IMR-90 (cell line): ENCODE measurements at regions of chr17 and their contacts with region 1.

Region 1: DNA sequence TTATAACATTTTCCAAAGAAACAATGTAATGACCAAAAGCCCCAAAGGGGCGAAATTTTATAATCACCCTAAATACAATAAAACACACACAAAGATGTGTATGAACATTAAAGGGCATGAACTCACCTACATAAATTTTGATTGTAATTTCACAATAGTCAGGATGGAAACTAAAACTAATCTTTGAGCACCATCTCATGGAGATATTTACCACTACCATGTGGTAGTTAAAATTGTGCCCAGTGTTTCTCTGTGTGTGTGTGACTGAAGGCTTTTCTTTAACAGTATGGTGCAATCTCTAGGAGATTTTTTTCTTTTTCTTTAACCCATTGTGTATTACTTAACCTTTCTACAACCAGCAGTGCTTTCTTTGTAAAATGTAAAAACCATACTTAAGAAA is 19.7 kb upstream of the MEIOC start:
- DNase-seq: peak; percentile 72
- ATAC-seq: peak; percentile 82
- H3K4me3 ChIP-seq: no peak overlapping the region
- H3K27ac ChIP-seq: no peak overlapping the region
- H3K4me1 ChIP-seq: no peaks in the 10 kb centered on the region
- H3K27me3 ChIP-seq: peaks cover 4% of the 10 kb centered on the region; the same call in 1 of the 2 replicates
- CTCF ChIP-seq: peak; percentile 80
- POLR2A ChIP-seq: 0 out of 2 replicates have a peak, but pooled peaks have one; percentile 21
- RAD21 ChIP-seq: peak; percentile 87

Region 2: DNA sequence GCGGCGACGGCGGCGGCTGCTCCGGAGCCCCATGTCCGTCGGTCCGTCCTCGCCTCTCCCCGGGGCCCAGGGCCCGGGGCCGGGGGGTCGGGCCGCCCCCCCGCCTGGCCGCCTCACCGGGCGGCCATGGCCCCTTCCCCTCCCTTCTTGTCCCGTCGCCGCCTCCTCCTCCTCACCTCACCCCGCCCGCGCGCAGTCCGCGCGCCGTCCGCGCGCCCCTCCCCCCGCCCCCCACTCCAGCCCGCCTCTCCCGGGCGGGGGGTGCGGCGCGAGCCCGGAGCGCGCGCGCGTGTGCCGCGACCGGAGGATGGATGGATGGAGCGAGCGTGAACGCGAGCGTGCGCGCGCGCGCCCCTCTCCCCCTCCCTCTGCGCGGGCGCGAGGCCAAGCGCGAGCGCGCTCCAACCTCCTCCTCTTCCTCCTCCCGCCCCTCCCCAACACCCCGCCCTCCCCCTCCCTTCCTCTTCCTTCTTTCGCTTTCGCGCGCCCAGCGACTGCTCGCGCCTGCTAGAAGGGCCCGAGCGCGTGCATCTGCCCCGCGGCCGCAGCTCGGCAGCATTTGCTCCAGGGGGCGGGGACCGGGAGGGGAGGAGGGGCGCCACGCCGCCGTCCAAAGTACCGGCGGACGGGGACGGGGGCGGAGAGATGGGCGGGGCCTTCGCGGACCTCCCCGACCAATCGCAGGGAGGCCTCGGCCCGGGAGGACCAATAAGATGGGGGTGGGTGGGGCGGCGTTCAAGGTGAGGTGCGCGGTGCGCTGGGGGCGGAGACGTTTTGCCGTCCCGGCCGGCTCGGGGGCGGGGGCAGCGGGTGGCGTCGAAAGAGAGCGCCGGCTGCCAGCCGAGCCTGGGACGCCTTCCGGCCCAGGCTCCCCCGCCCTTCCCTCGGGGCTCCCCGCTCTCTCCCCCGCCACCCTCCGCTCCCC is 436.7 kb before region 1 on chr17 and contains the start of gene ATXN7L3:
- CTCF ChIA-PET with region 1: interaction called, 5 read pairs
- POLR2A ChIA-PET with region 1: no interaction called
- dilution Hi-C with region 1: no loop called
- in situ Hi-C with region 1: loop called (anchors 25 kb)
- intact Hi-C with region 1: no loop called
- DNase-seq: peak; percentile 97
- ATAC-seq: peak; percentile 84
- H3K4me3 ChIP-seq: peak within 1 kb of the TSS; percentile 85
- H3K27ac ChIP-seq: peak within 1 kb of the TSS; percentile 98
- H3K4me1 ChIP-seq: peaks cover 22% of the 10 kb centered on the region
- H3K27me3 ChIP-seq: no peaks in the 10 kb centered on the region
- CTCF ChIP-seq: no peak
- POLR2A ChIP-seq: peak; percentile 79
- RAD21 ChIP-seq: no peak
- total RNA-seq, gene ATXN7L3: 17.2 and 17.5 TPM in 2 replicates

Region 3: DNA sequence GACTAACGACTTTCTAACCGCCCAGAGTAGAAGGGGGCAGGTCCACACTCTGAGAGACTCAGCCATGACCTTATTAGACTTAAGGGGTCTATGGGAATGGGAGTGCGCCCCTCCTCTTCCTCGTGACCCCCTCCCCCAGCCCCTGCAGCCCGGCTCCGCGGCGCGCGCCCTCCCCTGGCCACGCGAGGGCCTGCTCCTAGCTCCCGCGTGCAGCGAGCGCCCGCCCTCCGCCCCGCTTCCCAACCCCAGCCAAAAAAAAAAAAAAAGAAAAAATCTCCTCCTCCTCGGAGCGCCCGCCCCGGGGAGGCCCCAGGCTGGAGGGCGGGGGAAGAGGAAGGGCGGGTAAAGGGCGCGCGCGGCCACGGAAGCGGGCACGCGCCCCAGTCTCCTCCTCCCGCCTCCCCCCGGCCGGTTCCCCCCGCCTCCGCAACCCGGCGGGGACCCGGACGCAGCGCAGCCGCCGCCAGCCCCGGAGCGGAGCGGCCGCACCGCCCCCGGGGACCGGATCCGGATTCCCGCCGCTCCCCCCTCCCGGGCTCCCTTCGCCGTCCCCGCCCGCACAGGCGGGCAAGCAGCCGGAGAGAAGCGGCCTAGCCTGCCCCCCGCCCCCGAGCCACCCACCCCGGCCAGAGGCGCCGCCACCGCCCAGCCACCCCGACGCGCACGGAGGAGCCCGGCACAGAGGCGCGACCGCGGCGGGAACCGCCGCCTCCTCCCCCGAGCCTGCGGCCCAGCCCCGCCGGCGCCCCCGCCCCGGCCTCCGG is 418.0 kb before region 1 on chr17:
- CTCF ChIA-PET with region 1: no interaction called
- POLR2A ChIA-PET with region 1: no interaction called
- dilution Hi-C with region 1: no loop called
- in situ Hi-C with region 1: loop called (anchors 25 kb)
- intact Hi-C with region 1: loop called (anchors 5 kb)
- DNase-seq: peak; percentile 83
- ATAC-seq: peak; percentile 66
- H3K4me3 ChIP-seq: peak overlapping the region; percentile 61
- H3K27ac ChIP-seq: peak overlapping the region; percentile 92
- H3K4me1 ChIP-seq: peaks cover 12% of the 10 kb centered on the region
- H3K27me3 ChIP-seq: no peaks in the 10 kb centered on the region
- CTCF ChIP-seq: peak; percentile 66
- POLR2A ChIP-seq: peak; percentile 42; the same call in 1 of the 2 replicates
- RAD21 ChIP-seq: peak; percentile 31

Region 4: GRCh38 chr17:44400226-44400847 is 236.2 kb before region 1 on chr17:
- CTCF ChIA-PET with region 1: no interaction called
- POLR2A ChIA-PET with region 1: no interaction called
- dilution Hi-C with region 1: no loop called
- in situ Hi-C with region 1: loop called (anchors 10 kb)
- intact Hi-C with region 1: loop called (anchors 2 kb)
- DNase-seq: peak; percentile 41
- ATAC-seq: peak; percentile 89
- H3K4me3 ChIP-seq: no peak overlapping the region
- H3K27ac ChIP-seq: no peak overlapping the region
- H3K4me1 ChIP-seq: no peaks in the 10 kb centered on the region
- H3K27me3 ChIP-seq: no peaks in the 10 kb centered on the region
- CTCF ChIP-seq: peak; percentile 66
- POLR2A ChIP-seq: no peak
- RAD21 ChIP-seq: peak; percentile 65

Region 5: GRCh38 chr17:44533533-44534246 is 102.9 kb before region 1 on chr17:
- CTCF ChIA-PET with region 1: interaction called, 14 read pairs
- POLR2A ChIA-PET with region 1: no interaction called
- dilution Hi-C with region 1: no loop called
- in situ Hi-C with region 1: loop called (anchors 5 kb)
- intact Hi-C with region 1: loop called (anchors 1 kb)
- DNase-seq: peak; percentile 90
- ATAC-seq: peak; percentile 83
- H3K4me3 ChIP-seq: peak overlapping the region; percentile 2; the same call in 1 of the 2 replicates
- H3K27ac ChIP-seq: peak overlapping the region; percentile 61
- H3K4me1 ChIP-seq: peaks cover 12% of the 10 kb centered on the region
- H3K27me3 ChIP-seq: no peaks in the 10 kb centered on the region
- CTCF ChIP-seq: peak; percentile 98
- POLR2A ChIP-seq: peak; percentile 60; the same call in 1 of the 2 replicates
- RAD21 ChIP-seq: peak; percentile 99

Region 6: DNA sequence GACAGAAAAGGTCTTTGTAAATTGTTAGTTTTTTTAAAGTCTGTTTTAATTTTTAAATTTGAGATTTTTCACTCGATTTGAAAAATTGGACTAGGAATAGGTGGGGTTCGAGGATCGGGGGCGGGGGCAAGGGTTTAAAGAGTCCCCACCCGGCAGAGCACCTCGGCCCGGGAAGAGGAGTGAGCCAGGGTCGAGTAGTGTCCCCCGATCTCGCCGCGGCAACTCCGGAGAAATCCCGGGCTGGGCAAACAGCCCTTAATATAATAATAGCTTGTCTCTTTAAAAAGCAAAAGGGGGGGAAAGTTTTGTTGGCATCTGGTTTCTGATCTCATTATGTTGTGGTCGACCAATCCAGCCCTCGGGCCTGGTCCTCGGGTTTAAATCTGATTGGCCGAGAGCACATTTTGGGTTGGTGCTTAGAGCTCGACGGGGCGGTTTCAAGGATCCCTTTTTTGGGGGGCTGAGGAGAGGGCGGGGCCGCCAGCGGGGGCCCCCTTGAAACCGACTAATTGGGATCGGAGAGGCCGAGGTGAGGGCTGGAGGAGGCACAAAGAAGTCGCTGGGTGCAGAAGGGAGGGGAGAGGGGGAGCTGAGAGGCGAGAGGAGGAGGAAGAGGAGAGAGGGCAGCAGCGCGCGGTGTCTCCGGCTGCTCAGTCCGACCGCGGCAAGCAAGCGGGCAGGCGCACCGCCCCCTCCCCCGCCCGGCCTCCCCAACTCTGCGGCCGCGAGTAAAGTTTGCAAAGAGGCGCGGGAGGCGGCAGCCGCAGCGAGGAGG is 79.5 kb before region 1 on chr17 and contains the start of gene FZD2:
- CTCF ChIA-PET with region 1: no interaction called
- POLR2A ChIA-PET with region 1: interaction called, 5 read pairs
- dilution Hi-C with region 1: no loop called
- in situ Hi-C with region 1: no loop called
- intact Hi-C with region 1: loop called (anchors 1 kb)
- DNase-seq: peak; percentile 99
- ATAC-seq: peak; percentile 80
- H3K4me3 ChIP-seq: peak within 1 kb of the TSS; percentile 87
- H3K27ac ChIP-seq: peak within 1 kb of the TSS; percentile 91
- H3K4me1 ChIP-seq: peaks cover 14% of the 10 kb centered on the region
- H3K27me3 ChIP-seq: no peaks in the 10 kb centered on the region
- CTCF ChIP-seq: no peak
- POLR2A ChIP-seq: peak; percentile 58
- RAD21 ChIP-seq: no peak
- total RNA-seq, gene FZD2: 21.3 and 22.8 TPM in 2 replicates

Region 7: GRCh38 chr17:44565866-44566443 is 70.6 kb before region 1 on chr17:
- CTCF ChIA-PET with region 1: no interaction called
- POLR2A ChIA-PET with region 1: interaction called, 5 read pairs
- dilution Hi-C with region 1: no loop called
- in situ Hi-C with region 1: no loop called
- intact Hi-C with region 1: loop called (anchors 2 kb)
- DNase-seq: no peak
- ATAC-seq: peak; percentile 55; the same call in 1 of the 2 replicates
- H3K4me3 ChIP-seq: no peak overlapping the region
- H3K27ac ChIP-seq: no peak overlapping the region
- H3K4me1 ChIP-seq: peaks cover 3% of the 10 kb centered on the region
- H3K27me3 ChIP-seq: no peaks in the 10 kb centered on the region
- CTCF ChIP-seq: peak; percentile 64
- POLR2A ChIP-seq: no peak
- RAD21 ChIP-seq: peak; percentile 70

Region 8: DNA sequence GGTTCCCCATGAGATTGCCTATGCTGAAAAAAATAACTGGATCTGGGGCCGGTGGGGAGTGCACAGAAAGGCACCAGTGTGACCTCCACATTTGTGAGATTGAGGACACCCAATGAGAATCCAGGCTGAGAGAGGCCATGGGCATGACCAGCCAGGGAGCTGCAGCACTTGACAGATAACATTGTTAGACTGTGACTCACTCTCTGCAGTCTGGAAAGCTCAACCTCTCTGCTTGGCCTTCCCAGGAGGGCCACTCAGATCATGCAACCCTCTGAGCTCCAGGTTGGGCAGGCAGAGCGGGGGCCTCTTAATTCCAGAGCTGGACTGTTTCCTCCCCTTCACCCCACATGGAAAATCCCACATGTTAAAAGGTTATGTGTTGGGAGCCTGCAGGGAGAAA is 49.2 kb before region 1 on chr17:
- CTCF ChIA-PET with region 1: no interaction called
- POLR2A ChIA-PET with region 1: no interaction called
- dilution Hi-C with region 1: no loop called
- in situ Hi-C with region 1: no loop called
- intact Hi-C with region 1: no loop called
- DNase-seq: peak; percentile 91
- ATAC-seq: peak; percentile 100
- H3K4me3 ChIP-seq: no peak overlapping the region
- H3K27ac ChIP-seq: peak overlapping the region; percentile 38
- H3K4me1 ChIP-seq: peaks cover 9% of the 10 kb centered on the region
- H3K27me3 ChIP-seq: no peaks in the 10 kb centered on the region
- CTCF ChIP-seq: no peak
- POLR2A ChIP-seq: no peak
- RAD21 ChIP-seq: peak; percentile 8; the same call in 1 of the 2 replicates

Region 9: GRCh38 chr17:44623070-44623725 is 13.4 kb before region 1 on chr17:
- CTCF ChIA-PET with region 1: no interaction called
- POLR2A ChIA-PET with region 1: no interaction called
- dilution Hi-C with region 1: no loop called
- in situ Hi-C with region 1: no loop called
- intact Hi-C with region 1: no loop called
- DNase-seq: no peak
- ATAC-seq: no peak
- H3K4me3 ChIP-seq: no peak overlapping the region
- H3K27ac ChIP-seq: no peak overlapping the region
- H3K4me1 ChIP-seq: peaks cover 3% of the 10 kb centered on the region; the same call in 1 of the 2 replicates
- H3K27me3 ChIP-seq: peaks cover 6% of the 10 kb centered on the region
- CTCF ChIP-seq: no peak
- POLR2A ChIP-seq: no peak
- RAD21 ChIP-seq: no peak